A673 (cell line): ENCODE measurements at regions of chr1 and their contacts with region 1.

Region 1: DNA sequence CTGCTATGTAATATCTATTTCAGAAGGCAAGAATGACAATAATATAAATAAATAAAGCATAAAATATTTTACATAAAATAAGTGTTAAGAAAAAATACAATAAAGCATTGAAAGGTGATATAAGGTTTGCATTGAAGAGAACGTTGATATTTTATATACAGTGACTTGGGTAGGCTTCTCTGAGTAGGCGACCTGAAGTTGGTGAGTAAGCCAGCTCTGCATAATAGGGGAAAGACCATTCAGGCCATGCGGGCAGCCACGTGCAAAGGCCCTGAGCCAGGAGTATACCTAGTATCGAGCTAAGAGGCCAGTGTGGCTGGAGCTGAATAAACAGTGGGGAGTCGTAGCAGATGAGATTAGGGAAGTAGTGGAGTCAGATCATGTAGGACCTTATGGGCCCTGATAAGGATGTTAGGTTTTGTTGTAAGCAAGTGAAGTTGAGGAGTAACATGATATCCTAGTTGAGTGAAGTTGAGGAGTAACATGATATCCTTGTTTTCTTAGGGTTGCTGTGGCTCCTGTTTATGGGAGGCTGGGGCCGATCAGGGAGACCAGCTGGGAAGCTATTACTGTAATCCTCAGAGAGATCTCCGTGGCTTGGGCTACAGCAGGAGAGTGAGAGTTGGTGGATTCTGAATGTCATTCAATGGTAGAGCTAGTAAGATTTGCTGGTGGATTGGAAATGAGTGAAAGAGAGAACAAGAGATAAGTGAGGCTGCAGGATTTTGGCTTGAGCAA is 22.0 kb downstream of the KCNK1 start:
- DNase-seq: peak; percentile 33
- H3K4me3 ChIP-seq: no peak overlapping the region
- H3K27ac ChIP-seq: no peak overlapping the region
- H3K4me1 ChIP-seq: no peaks in the 10 kb centered on the region
- H3K27me3 ChIP-seq: peaks cover 35% of the 10 kb centered on the region
- CTCF ChIP-seq: no peak

Region 2: DNA sequence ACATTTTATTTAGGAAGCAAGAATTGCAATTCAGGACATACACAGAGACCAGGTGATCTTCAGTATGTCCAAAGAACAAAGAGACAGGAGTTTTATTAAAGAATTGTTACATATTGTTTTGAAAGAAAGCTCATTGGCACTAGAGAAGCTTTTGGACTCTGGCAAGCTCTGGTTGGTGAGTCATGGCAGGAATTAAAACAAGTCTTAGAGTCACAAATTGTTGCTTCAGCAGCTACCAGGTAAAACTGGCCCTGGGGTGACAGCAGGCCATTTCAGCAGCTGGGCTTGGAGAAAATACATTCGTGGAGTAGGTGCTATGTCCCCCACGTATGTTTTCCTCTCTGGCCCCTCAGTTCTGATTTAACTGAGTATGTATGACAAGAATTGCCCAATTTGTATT is 249.6 kb before region 1 on chr1:
- CTCF ChIA-PET with region 1: no interaction called
- POLR2A ChIA-PET with region 1: no interaction called
- intact Hi-C with region 1: no loop called
- DNase-seq: no peak
- H3K4me3 ChIP-seq: no peak overlapping the region
- H3K27ac ChIP-seq: no peak overlapping the region
- H3K4me1 ChIP-seq: no peaks in the 10 kb centered on the region
- H3K27me3 ChIP-seq: no peaks in the 10 kb centered on the region
- CTCF ChIP-seq: no peak

Region 3: DNA sequence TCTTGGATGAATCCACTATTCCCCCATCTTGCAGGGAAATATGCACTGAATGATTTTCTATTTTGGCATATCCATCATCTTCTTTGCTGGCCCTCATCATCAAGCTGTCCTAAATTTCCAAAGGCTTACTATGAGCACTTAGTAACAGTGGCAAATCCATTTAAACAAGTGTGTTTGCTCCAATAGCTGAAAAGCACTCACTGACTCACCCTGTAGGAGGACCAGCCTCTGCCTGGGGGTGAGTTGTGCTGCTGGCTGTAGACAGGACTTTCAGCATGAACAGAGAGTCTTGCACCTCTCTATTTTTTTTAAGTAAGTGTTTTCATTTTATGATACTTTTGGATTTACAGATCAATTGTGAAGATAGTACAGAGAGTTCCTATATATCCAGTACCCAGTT is 365.9 kb after region 1 on chr1:
- CTCF ChIA-PET with region 1: interaction called, 10 read pairs
- POLR2A ChIA-PET with region 1: no interaction called
- intact Hi-C with region 1: no loop called
- DNase-seq: no peak
- H3K4me3 ChIP-seq: no peak overlapping the region
- H3K27ac ChIP-seq: no peak overlapping the region
- H3K4me1 ChIP-seq: peaks cover 17% of the 10 kb centered on the region
- H3K27me3 ChIP-seq: peaks cover 27% of the 10 kb centered on the region
- CTCF ChIP-seq: no peak